Activated CD8-positive, alpha-beta memory T cell treated with anti-CD3 and anti-CD28 coated beads, Interleukin-2, amount 10 ng/mL, durations not matched to agents 7 days and 5 days (primary cell): ENCODE measurements at regions of chr20 and their contacts with region 1.

Region 1: GRCh38 chr20:5788385-5788895 is 38.2 kb downstream of the SHLD1 start:
- DNase-seq: peak; percentile 86
- ATAC-seq: peak; percentile 97
- H3K4me3 Mint-ChIP-seq: no peak overlapping the region
- H3K27ac Mint-ChIP-seq: no peak overlapping the region
- H3K4me1 Mint-ChIP-seq: peaks cover 3% of the 10 kb centered on the region
- H3K27me3 Mint-ChIP-seq: no peaks in the 10 kb centered on the region

Region 2: GRCh38 chr20:5550733-5551529 is 237.5 kb before region 1 on chr20:
- CTCF ChIA-PET with region 1: interaction called, 14 read pairs
- DNase-seq: no peak
- ATAC-seq: no peak
- H3K4me3 Mint-ChIP-seq: no peak overlapping the region
- H3K27ac Mint-ChIP-seq: no peak overlapping the region
- H3K4me1 Mint-ChIP-seq: peaks cover 6% of the 10 kb centered on the region
- H3K27me3 Mint-ChIP-seq: no peaks in the 10 kb centered on the region

Region 3: GRCh38 chr20:5557123-5557522 is 231.3 kb before region 1 on chr20:
- CTCF ChIA-PET with region 1: interaction called, 23 read pairs
- DNase-seq: peak; percentile 77
- ATAC-seq: peak; percentile 76
- H3K4me3 Mint-ChIP-seq: no peak overlapping the region
- H3K27ac Mint-ChIP-seq: peak overlapping the region; percentile 37
- H3K4me1 Mint-ChIP-seq: no peaks in the 10 kb centered on the region
- H3K27me3 Mint-ChIP-seq: no peaks in the 10 kb centered on the region

Region 4: GRCh38 chr20:5569021-5569420 is 219.4 kb before region 1 on chr20:
- CTCF ChIA-PET with region 1: interaction called, 69 read pairs
- DNase-seq: peak; percentile 62
- ATAC-seq: peak; percentile 82
- H3K4me3 Mint-ChIP-seq: no peak overlapping the region
- H3K27ac Mint-ChIP-seq: peak overlapping the region; percentile 36
- H3K4me1 Mint-ChIP-seq: peaks cover 19% of the 10 kb centered on the region
- H3K27me3 Mint-ChIP-seq: no peaks in the 10 kb centered on the region

Region 5: GRCh38 chr20:5608442-5609161 is 179.8 kb before region 1 on chr20:
- CTCF ChIA-PET with region 1: interaction called, 10 read pairs
- DNase-seq: no peak
- ATAC-seq: no peak
- H3K4me3 Mint-ChIP-seq: peak overlapping the region; percentile 97
- H3K27ac Mint-ChIP-seq: peak overlapping the region; percentile 100
- H3K4me1 Mint-ChIP-seq: peaks cover 55% of the 10 kb centered on the region
- H3K27me3 Mint-ChIP-seq: no peaks in the 10 kb centered on the region

Region 6: DNA sequence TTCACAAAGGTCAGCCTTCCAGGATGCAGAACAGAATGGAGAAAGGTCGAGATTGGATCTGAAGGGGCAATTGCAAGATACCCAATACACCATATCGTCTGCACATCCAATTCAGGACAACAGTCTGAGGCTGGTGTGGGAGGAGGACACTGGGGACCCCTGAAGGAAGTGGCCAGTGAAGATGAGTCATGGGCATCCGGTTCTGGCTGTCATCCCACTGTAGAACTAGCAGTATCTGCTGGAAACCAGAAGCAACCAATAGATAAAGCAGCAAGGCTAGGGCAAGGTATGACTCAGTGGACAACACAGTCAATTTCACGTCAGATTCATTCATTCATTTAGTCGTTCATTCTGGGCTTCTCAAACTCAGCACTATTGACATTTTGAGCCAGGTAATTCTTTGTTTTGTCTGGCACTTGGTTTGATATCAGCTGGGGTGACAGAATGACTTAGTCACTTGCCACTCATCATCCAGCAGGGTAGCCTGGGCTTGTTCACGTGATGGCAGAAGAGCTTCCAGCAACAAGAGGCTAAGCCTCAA is 68.5 kb before region 1 on chr20:
- CTCF ChIA-PET with region 1: no interaction called
- DNase-seq: peak; percentile 49
- ATAC-seq: peak; percentile 77
- H3K4me3 Mint-ChIP-seq: no peak overlapping the region
- H3K27ac Mint-ChIP-seq: no peak overlapping the region
- H3K4me1 Mint-ChIP-seq: peaks cover 20% of the 10 kb centered on the region
- H3K27me3 Mint-ChIP-seq: no peaks in the 10 kb centered on the region

Region 7: DNA sequence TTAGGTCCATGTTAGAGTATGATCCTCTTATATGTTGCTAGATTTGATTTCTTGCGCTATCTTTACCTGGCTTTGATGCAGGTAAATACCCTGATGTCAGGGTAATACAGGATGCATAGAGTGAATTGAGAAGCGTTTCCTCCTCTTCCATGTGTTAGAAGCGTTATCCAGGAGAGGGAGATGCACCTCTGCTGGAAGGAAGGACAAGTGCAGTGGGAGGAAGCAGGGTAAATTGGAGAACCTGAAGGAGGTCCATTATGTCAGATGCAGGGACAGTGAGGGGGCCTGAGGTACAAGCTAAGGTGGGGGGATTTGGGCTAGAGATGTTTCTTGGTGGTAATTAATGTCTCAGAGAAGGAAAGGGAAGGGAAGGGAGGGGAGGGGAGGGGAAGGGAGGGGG is 30.5 kb before region 1 on chr20:
- CTCF ChIA-PET with region 1: no interaction called
- DNase-seq: no peak
- ATAC-seq: no peak
- H3K4me3 Mint-ChIP-seq: no peak overlapping the region
- H3K27ac Mint-ChIP-seq: no peak overlapping the region
- H3K4me1 Mint-ChIP-seq: peaks cover 28% of the 10 kb centered on the region
- H3K27me3 Mint-ChIP-seq: no peaks in the 10 kb centered on the region

Region 8: DNA sequence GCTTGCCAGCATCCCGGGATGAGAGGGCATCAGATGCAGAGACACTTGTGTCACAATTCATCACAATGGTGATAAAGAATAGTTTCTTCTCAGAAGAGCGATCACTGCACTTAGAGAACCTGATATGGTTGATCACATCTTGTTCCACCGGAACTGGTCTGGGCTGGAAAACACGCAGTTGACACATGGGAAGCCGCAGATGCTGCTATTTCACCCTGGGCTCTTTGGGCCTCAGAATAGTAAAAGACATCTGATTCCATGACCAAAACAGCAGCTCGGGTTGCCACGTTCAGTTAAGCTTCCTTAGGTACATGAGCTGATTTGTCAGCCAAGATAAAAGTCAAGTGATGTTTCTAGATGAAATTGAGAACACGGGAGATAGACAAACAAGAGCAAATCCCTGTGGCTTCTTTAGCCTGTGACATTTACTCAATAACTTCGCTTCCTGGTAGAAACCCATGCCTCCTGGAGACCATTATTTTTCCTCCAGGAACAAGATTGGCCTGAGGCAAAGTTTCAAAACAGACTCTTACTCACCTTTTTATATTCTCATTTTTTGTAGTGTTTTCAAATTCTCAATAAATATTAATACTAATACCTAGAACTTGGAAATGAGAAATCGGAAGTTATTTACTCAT is 102.5 kb after region 1 on chr20:
- CTCF ChIA-PET with region 1: no interaction called
- DNase-seq: no peak
- ATAC-seq: no peak
- H3K4me3 Mint-ChIP-seq: no peak overlapping the region
- H3K27ac Mint-ChIP-seq: no peak overlapping the region
- H3K4me1 Mint-ChIP-seq: no peaks in the 10 kb centered on the region
- H3K27me3 Mint-ChIP-seq: peaks cover 24% of the 10 kb centered on the region

Region 9: GRCh38 chr20:6008254-6008653 is 219.8 kb after region 1 on chr20:
- CTCF ChIA-PET with region 1: interaction called, 11 read pairs
- DNase-seq: no peak
- ATAC-seq: no peak
- H3K4me3 Mint-ChIP-seq: no peak overlapping the region
- H3K27ac Mint-ChIP-seq: no peak overlapping the region
- H3K4me1 Mint-ChIP-seq: peaks cover 33% of the 10 kb centered on the region
- H3K27me3 Mint-ChIP-seq: no peaks in the 10 kb centered on the region